ENCODE measurements at regions of chr19 and their contacts with region 1.

Region 1: GRCh38 chr19:18846862-18847548 is 15.2 kb downstream of the UPF1 start:
- DNase-seq: peak; percentile 56
- ATAC-seq: peak; percentile 77
- H3K4me3 Mint-ChIP-seq: no peak overlapping the region
- H3K27ac Mint-ChIP-seq: peak overlapping the region; percentile 46
- H3K4me1 Mint-ChIP-seq: peaks cover 75% of the 10 kb centered on the region
- H3K27me3 Mint-ChIP-seq: no peaks in the 10 kb centered on the region
- CTCF ChIP-seq: peak; percentile 35

Region 2: GRCh38 chr19:18469069-18469846 is 377.7 kb before region 1 on chr19:
- CTCF ChIA-PET with region 1: interaction called, 12 read pairs
- POLR2A ChIA-PET with region 1: no interaction called
- intact Hi-C with region 1: loop called (anchors 1 kb)
- DNase-seq: peak; percentile 44
- ATAC-seq: peak; percentile 48
- H3K4me3 Mint-ChIP-seq: no peak overlapping the region
- H3K27ac Mint-ChIP-seq: no peak overlapping the region
- H3K4me1 Mint-ChIP-seq: peaks cover 5% of the 10 kb centered on the region
- H3K27me3 Mint-ChIP-seq: no peaks in the 10 kb centered on the region
- CTCF ChIP-seq: no peak

Region 3: GRCh38 chr19:18685597-18686190 is 161.3 kb before region 1 on chr19:
- CTCF ChIA-PET with region 1: no interaction called
- POLR2A ChIA-PET with region 1: no interaction called
- intact Hi-C with region 1: no loop called
- DNase-seq: no peak
- ATAC-seq: no peak
- H3K4me3 Mint-ChIP-seq: no peak overlapping the region
- H3K27ac Mint-ChIP-seq: no peak overlapping the region
- H3K4me1 Mint-ChIP-seq: peaks cover 35% of the 10 kb centered on the region
- H3K27me3 Mint-ChIP-seq: no peaks in the 10 kb centered on the region
- CTCF ChIP-seq: no peak

Region 4: GRCh38 chr19:18798384-18799352 is 48.3 kb before region 1 on chr19:
- CTCF ChIA-PET with region 1: no interaction called
- POLR2A ChIA-PET with region 1: no interaction called
- intact Hi-C with region 1: no loop called
- DNase-seq: no peak
- ATAC-seq: no peak
- H3K4me3 Mint-ChIP-seq: no peak overlapping the region
- H3K27ac Mint-ChIP-seq: no peak overlapping the region
- H3K4me1 Mint-ChIP-seq: no peaks in the 10 kb centered on the region
- H3K27me3 Mint-ChIP-seq: peaks cover 30% of the 10 kb centered on the region
- CTCF ChIP-seq: no peak

Region 5: GRCh38 chr19:19297759-19298158 is 450.8 kb after region 1 on chr19:
- CTCF ChIA-PET with region 1: no interaction called
- POLR2A ChIA-PET with region 1: no interaction called
- intact Hi-C with region 1: no loop called
- DNase-seq: no peak
- ATAC-seq: no peak
- H3K4me3 Mint-ChIP-seq: no peak overlapping the region
- H3K27ac Mint-ChIP-seq: no peak overlapping the region
- H3K4me1 Mint-ChIP-seq: no peaks in the 10 kb centered on the region
- H3K27me3 Mint-ChIP-seq: no peaks in the 10 kb centered on the region
- CTCF ChIP-seq: no peak